ENCODE measurements at regions of chr14 and their contacts with region 1.

Region 1: GRCh38 chr14:87805315-87805723 is 187.7 kb downstream of the GALC start:
- DNase-seq: peak; percentile 84
- ATAC-seq: peak; percentile 99
- H3K4me3 Mint-ChIP-seq: no peak overlapping the region
- H3K27ac Mint-ChIP-seq: no peak overlapping the region
- H3K4me1 Mint-ChIP-seq: no peaks in the 10 kb centered on the region
- H3K27me3 Mint-ChIP-seq: no peaks in the 10 kb centered on the region
- CTCF ChIP-seq: peak; percentile 95

Region 2: DNA sequence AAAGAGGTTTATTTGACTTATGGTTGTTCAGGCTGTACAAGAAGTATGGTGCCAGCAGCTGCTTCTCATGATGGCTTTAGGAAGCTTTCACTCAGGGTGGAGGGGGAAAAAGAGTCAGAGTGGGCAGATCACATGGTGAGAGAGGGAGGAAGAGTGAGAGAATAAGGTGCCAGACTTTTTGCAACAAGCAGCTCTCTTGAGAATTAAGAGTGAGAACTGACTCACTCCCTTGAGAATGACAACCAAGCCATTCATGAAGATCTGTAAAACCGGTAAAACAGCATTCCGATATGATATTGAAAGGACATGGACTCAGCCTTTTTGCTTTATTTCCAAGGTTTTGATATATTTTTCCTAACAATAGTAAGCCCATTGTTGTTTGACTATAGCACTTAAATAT is 313.5 kb before region 1 on chr14:
- CTCF ChIA-PET with region 1: no interaction called
- POLR2A ChIA-PET with region 1: no interaction called
- DNase-seq: no peak
- ATAC-seq: no peak
- H3K4me3 Mint-ChIP-seq: no peak overlapping the region
- H3K27ac Mint-ChIP-seq: no peak overlapping the region
- H3K4me1 Mint-ChIP-seq: peaks cover 19% of the 10 kb centered on the region
- H3K27me3 Mint-ChIP-seq: no peaks in the 10 kb centered on the region
- CTCF ChIP-seq: no peak

Region 3: GRCh38 chr14:87725318-87725717 is 80.0 kb before region 1 on chr14:
- CTCF ChIA-PET with region 1: no interaction called
- POLR2A ChIA-PET with region 1: no interaction called
- DNase-seq: no peak
- ATAC-seq: no peak
- H3K4me3 Mint-ChIP-seq: no peak overlapping the region
- H3K27ac Mint-ChIP-seq: no peak overlapping the region
- H3K4me1 Mint-ChIP-seq: no peaks in the 10 kb centered on the region
- H3K27me3 Mint-ChIP-seq: no peaks in the 10 kb centered on the region; the same call in 1 of the 2 replicates
- CTCF ChIP-seq: no peak

Region 4: DNA sequence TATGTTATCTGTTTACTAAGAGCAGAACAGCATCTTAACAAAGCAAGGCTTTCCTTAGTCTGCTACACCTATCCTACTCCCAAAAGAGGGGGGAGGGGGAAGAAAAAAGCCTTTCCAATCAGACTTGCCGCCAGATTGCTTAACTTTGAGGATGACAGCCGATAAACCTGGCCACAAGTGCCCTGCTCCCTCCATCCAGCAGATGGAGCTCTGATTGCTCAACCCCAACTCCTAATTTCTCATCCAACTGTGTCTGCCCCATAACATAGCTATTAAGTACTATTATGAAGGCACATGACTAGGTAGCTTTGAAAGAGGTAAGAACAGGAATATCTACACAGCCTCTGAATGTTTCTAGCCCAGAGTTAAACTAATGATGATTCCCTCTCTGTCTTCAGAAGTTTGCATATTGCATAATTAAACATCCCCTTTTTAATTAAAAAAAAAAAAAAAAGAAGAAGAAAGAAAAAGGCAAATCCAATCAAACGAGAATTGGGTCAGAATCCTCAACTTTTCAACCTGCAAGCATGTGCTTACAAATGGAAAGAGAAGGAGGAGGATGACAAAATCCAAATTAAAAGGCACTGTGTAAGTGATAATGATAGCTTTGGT is 59.7 kb before region 1 on chr14:
- CTCF ChIA-PET with region 1: interaction called, 20 read pairs
- POLR2A ChIA-PET with region 1: no interaction called
- DNase-seq: peak; percentile 62
- ATAC-seq: peak; percentile 91
- H3K4me3 Mint-ChIP-seq: no peak overlapping the region
- H3K27ac Mint-ChIP-seq: no peak overlapping the region
- H3K4me1 Mint-ChIP-seq: 0 out of 2 replicates have a peak, but pooled peaks cover 3% of the 10 kb centered on the region
- H3K27me3 Mint-ChIP-seq: no peaks in the 10 kb centered on the region
- CTCF ChIP-seq: peak; percentile 45

Region 5: DNA sequence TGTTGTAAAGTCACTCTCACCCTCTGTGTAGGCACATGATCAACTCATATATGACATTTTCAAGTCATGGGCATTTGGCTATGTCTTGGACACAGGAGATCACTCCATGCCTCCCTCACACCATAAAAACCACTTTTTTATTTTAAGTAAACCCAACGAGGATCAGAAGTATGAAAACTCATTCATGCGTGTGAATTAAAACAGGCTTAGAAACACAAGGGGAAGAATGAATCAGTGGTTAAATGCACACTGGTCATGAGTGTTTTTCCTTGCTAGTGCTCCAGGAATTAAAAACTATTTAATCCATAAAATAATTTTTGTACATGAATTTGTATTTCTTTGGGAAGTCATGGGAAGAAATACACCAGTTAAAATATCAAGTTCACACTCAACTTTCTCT is 10.8 kb before region 1 on chr14:
- CTCF ChIA-PET with region 1: interaction called, 26 read pairs
- POLR2A ChIA-PET with region 1: interaction called, 3 read pairs
- DNase-seq: no peak
- ATAC-seq: no peak
- H3K4me3 Mint-ChIP-seq: no peak overlapping the region
- H3K27ac Mint-ChIP-seq: no peak overlapping the region
- H3K4me1 Mint-ChIP-seq: peaks cover 22% of the 10 kb centered on the region
- H3K27me3 Mint-ChIP-seq: peaks cover 9% of the 10 kb centered on the region
- CTCF ChIP-seq: no peak

Region 6: GRCh38 chr14:87824266-87824665 is 18.9 kb after region 1 on chr14:
- CTCF ChIA-PET with region 1: interaction called, 15 read pairs
- POLR2A ChIA-PET with region 1: no interaction called
- DNase-seq: no peak
- ATAC-seq: no peak
- H3K4me3 Mint-ChIP-seq: no peak overlapping the region
- H3K27ac Mint-ChIP-seq: no peak overlapping the region
- H3K4me1 Mint-ChIP-seq: peaks cover 8% of the 10 kb centered on the region
- H3K27me3 Mint-ChIP-seq: no peaks in the 10 kb centered on the region; the same call in 1 of the 2 replicates
- CTCF ChIP-seq: no peak

Region 7: DNA sequence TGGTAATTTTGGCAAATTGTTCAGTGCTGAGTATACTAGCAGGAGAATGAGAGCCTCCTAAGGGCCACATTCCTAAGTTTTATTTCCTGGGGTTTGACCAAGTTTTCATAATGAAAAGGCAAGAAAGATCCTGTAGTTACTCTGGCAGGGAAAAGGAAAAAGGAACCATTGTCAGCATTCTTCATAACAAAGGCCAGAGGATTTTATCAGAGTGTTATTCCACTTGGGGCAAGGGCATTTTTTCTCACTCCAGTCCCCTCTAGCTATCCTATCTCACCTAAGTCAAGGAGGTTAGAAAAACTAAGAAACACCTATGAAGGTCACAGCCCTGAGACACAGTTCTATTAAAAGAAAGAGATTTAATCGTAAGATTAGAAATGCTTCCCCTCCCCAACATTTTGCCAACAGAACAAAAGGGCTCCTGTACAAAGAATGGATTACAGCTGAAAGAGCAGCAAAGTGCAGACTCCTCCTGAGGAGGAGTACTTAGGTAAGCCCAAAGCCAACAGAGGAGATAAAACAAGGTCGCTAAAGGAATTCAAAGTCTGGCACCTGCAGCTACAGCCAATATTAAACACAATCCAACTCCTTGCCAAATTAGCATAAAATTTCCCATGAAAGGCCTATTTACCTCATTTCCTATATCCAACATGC is 25.3 kb after region 1 on chr14:
- CTCF ChIA-PET with region 1: interaction called, 15 read pairs
- POLR2A ChIA-PET with region 1: no interaction called
- DNase-seq: no peak
- ATAC-seq: peak; percentile 81
- H3K4me3 Mint-ChIP-seq: no peak overlapping the region
- H3K27ac Mint-ChIP-seq: peak overlapping the region; percentile 32; the same call in 1 of the 2 replicates
- H3K4me1 Mint-ChIP-seq: peaks cover 15% of the 10 kb centered on the region
- H3K27me3 Mint-ChIP-seq: peaks cover 2% of the 10 kb centered on the region; the same call in 1 of the 2 replicates
- CTCF ChIP-seq: no peak

Region 8: GRCh38 chr14:87896393-87897380 is 91.4 kb after region 1 on chr14:
- CTCF ChIA-PET with region 1: interaction called, 14 read pairs
- POLR2A ChIA-PET with region 1: no interaction called
- DNase-seq: no peak
- ATAC-seq: peak; percentile 60; the same call in 1 of the 2 replicates
- H3K4me3 Mint-ChIP-seq: no peak overlapping the region
- H3K27ac Mint-ChIP-seq: no peak overlapping the region
- H3K4me1 Mint-ChIP-seq: no peaks in the 10 kb centered on the region
- H3K27me3 Mint-ChIP-seq: no peaks in the 10 kb centered on the region
- CTCF ChIP-seq: peak; percentile 67